Right ventricle myocardium superior (tissue), 1 donor: ENCODE measurements at regions of chr18 and their contacts with region 1.

Region 1: DNA sequence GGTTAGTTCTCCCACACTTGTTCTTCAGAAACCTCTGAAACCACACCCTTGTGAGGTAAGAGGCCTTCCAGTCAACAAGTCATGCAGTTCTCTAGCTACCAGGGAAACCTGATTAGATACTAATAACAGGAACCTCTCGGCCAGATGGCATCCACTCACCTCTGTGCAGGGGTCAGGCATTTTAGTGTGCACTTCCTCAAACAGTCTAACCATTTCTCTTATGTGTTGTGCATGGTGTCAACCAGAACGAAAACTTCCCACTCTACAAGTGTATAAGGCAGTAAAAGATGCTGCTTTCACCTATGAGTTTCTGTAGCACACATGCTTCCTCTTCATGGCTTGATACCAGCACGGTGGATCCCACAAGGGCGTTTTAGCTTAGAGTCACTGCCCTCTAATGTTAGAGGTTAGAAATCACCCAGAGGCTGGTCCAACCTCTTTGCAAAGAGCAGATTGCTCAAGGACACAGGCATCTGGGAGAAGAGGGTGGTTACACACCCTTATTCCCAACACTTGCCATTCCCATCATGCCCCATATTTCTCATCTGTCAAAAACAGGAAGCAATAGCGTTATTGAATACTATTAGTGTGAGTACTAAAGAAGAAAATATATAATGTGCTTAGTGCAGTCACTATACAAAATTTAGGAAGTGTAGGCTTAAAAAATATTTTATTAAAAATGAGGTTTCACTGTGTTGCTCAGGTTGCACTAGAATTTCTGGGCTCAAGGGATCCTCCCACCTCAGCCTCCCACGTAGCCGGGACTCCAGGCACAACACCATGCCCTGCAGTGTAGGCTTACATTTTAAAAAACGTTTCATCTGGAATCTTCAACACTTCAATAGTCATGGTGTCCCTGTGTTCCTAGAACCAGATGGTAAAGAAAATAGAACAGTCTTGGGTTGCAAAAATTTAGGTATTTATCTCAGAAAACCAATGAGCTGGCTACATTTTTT is 34.5 kb upstream of the RAB31 start:
- DNase-seq: no peak
- ATAC-seq: peak; percentile 93

Region 2: DNA sequence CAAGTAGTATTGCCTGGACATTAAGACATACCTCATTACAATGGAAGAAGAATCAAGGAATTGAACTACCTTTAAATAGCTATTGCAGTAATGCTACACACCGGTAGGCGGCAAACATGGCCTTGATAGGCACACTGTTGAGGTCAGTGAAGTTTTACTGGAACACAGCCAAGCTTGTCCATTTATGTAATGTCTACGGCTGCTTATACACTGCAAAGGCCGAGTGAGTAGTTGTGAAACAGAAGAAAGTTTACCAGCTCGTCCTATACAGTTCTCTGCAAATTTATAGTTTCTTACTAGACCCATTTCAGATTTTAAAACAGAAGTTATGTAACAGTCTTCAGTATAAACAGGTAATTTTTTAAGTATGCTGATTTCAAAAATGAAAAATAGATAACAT is 98.0 kb before region 1 on chr18:
- intact Hi-C with region 1: loop called (anchors 10 kb)
- DNase-seq: peak; percentile 65
- ATAC-seq: peak; percentile 97

Region 3: DNA sequence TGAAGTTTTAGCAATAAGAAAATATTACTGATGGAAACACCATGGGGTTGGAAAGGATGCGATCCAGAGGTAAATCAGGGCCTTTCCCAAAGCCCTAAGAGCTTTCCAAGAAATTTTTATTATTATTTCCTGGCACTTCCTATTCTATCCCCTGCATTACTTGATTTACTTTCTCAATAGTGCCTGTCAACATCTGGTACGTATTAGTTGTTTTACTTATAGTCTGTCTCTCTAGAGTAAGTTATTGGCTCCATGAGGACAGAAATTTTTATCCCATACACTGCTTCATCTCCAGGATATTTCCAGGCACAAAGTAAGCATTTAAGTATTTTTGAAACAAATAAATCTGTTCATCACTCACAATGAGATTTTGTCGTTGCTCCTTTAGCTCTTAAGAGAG is 77.3 kb before region 1 on chr18:
- intact Hi-C with region 1: no loop called
- DNase-seq: no peak
- ATAC-seq: no peak